Activated CD8-positive, alpha-beta T cell treated with anti-CD3 and anti-CD28 coated beads, Interleukin-2, amount 10 ng/mL, durations not matched to agents 7 days and 5 days (primary cell): ENCODE measurements at regions of chr5 and their contacts with region 1.

Region 1: DNA sequence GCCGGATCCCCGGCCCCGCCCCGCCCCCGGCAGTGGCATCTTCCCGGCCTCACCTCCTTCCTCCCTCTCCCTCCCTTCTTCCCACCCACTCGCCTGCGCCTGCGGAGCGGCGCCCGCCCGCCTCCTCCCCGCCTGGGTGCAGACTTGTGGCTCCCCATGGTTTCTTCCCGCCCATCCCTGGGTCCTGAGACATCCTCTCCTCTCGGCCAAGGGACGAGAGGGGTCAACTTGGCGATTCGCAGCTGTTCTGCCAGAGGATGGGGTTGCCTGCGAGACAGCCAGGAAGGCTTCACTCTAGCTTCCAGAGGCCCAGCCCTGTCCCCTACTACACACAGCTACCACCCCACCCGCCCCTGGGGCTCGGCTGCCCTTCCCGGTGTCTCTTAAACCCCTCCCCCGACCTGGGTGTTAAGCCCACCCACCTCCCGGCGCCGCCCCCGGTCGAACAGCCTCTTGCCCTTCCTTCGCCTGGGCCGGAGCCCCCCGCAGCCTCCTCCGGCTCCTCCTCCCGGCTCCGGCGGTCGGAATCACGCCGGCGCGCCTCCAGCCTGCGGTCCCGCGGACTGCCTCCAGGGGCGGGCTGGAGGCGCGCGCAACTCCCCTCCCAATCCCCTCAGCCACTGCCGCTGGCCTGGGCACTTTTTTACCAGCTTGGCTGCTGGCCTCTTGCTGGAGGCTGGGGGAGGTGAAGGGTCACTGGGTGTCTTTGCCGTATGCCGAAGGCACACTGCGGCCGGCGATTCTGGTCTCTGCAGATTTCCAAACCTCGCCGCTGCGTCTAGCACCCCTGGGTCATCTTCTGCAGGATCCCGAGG is 1.9 kb downstream of the JADE2 start:
- DNase-seq: peak; percentile 83
- ATAC-seq: peak; percentile 60
- H3K4me3 Mint-ChIP-seq: peak overlapping the region; percentile 88
- H3K27ac Mint-ChIP-seq: peak overlapping the region; percentile 93
- H3K4me1 Mint-ChIP-seq: peaks cover 36% of the 10 kb centered on the region
- H3K27me3 Mint-ChIP-seq: peaks cover under 1% of the 10 kb centered on the region

Region 2: GRCh38 chr5:134411546-134412266 is 115.6 kb before region 1 on chr5 and contains the start of gene CDKN2AIPNL:
- CTCF ChIA-PET with region 1: interaction called, 9 read pairs
- POLR2A ChIA-PET with region 1: interaction called, 29 read pairs
- DNase-seq: peak; percentile 92
- ATAC-seq: peak; percentile 100
- H3K4me3 Mint-ChIP-seq: peak within 1 kb of the TSS; percentile 96
- H3K27ac Mint-ChIP-seq: peak within 1 kb of the TSS; percentile 87
- H3K4me1 Mint-ChIP-seq: peaks cover 36% of the 10 kb centered on the region
- H3K27me3 Mint-ChIP-seq: no peaks in the 10 kb centered on the region
- total RNA-seq, gene CDKN2AIPNL: 31.3 to 32.5 TPM

Region 3: DNA sequence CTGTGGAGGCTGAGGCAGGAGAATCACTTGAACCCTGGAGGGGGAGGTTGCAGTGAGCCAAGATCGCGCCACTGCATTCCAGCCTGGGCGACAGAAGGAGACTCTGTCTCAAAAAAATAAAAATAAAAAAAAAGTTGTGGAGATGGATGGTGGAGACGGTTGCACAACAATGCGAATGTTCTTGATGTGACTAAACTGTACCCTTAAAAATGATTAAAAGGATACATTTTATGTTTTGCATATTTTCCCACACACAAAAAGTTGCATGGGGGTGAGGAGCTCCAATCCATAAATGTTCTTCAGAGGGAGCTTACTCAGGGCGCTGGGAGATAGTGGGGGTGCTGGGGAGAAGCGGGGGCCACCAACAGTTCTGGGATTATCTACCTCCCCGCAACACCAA is 71.9 kb before region 1 on chr5:
- CTCF ChIA-PET with region 1: no interaction called
- POLR2A ChIA-PET with region 1: no interaction called
- DNase-seq: no peak
- ATAC-seq: no peak
- H3K4me3 Mint-ChIP-seq: no peak overlapping the region
- H3K27ac Mint-ChIP-seq: no peak overlapping the region
- H3K4me1 Mint-ChIP-seq: peaks cover under 1% of the 10 kb centered on the region
- H3K27me3 Mint-ChIP-seq: peaks cover 8% of the 10 kb centered on the region

Region 4: GRCh38 chr5:134503088-134503946 is 24.0 kb before region 1 on chr5:
- CTCF ChIA-PET with region 1: interaction called, 4 read pairs
- POLR2A ChIA-PET with region 1: interaction called, 29 read pairs
- DNase-seq: peak; percentile 84
- ATAC-seq: peak; percentile 95
- H3K4me3 Mint-ChIP-seq: peak overlapping the region; percentile 52
- H3K27ac Mint-ChIP-seq: peak overlapping the region; percentile 94
- H3K4me1 Mint-ChIP-seq: peaks cover 53% of the 10 kb centered on the region
- H3K27me3 Mint-ChIP-seq: no peaks in the 10 kb centered on the region

Region 5: GRCh38 chr5:134541736-134542376 is 14.5 kb after region 1 on chr5:
- CTCF ChIA-PET with region 1: interaction called, 34 read pairs
- POLR2A ChIA-PET with region 1: interaction called, 45 read pairs
- DNase-seq: no peak
- ATAC-seq: no peak
- H3K4me3 Mint-ChIP-seq: no peak overlapping the region
- H3K27ac Mint-ChIP-seq: no peak overlapping the region
- H3K4me1 Mint-ChIP-seq: peaks cover 45% of the 10 kb centered on the region
- H3K27me3 Mint-ChIP-seq: no peaks in the 10 kb centered on the region

Region 6: DNA sequence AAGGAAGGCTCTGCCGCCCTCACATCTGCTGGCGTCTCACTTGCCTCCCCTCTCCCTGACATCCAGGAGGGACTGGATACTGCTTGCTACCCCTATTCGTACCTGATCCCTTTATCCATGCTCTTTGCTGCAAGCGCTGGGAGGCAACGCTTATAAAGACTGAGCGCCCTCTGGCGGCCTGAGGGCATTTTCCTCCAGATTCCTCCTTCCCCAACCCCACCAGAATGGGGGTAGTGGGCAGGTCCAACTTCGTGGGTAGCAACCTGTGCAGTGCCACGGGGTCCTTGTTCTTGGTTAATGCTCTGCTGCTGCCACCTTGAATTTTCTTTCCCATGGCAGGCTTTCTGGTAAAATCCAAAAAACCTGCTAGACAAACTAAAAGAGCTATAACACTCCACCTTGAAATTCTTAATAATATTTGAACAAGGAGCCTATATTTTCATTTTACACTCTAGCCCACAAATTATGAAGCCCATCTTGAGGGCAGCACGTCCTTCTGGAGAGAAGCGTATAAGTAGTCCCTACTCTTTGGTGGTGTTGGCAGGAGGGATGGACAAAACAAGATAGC is 50.5 kb after region 1 on chr5:
- CTCF ChIA-PET with region 1: interaction called, 19 read pairs
- POLR2A ChIA-PET with region 1: no interaction called
- DNase-seq: peak; percentile 81
- ATAC-seq: peak; percentile 74
- H3K4me3 Mint-ChIP-seq: no peak overlapping the region
- H3K27ac Mint-ChIP-seq: peak overlapping the region; percentile 30
- H3K4me1 Mint-ChIP-seq: peaks cover 3% of the 10 kb centered on the region
- H3K27me3 Mint-ChIP-seq: no peaks in the 10 kb centered on the region

Region 7: GRCh38 chr5:134659456-134659855 is 132.1 kb after region 1 on chr5:
- CTCF ChIA-PET with region 1: no interaction called
- POLR2A ChIA-PET with region 1: no interaction called
- DNase-seq: no peak
- ATAC-seq: peak; percentile 44
- H3K4me3 Mint-ChIP-seq: no peak overlapping the region
- H3K27ac Mint-ChIP-seq: peak overlapping the region; percentile 7
- H3K4me1 Mint-ChIP-seq: peaks cover 11% of the 10 kb centered on the region
- H3K27me3 Mint-ChIP-seq: no peaks in the 10 kb centered on the region

Region 8: DNA sequence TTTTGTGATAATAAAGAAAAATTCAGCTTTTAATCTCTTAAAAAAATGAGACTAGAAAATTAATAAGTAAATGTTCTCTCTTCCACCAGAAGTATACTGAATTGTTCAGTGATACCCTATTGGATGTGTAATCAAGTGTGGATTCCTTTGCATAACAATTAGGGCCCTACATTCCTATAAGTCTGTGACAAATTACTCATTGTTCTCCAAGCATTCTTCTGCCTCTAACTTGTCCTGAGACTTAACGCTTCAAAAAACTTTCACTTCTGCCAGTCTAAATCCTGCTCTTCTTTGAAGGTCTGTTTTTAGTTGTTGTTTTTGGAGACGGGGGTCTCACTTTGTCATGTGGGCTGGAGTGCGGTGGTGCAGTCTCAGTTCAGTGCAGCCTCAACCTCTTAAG is 222.1 kb after region 1 on chr5:
- CTCF ChIA-PET with region 1: no interaction called
- POLR2A ChIA-PET with region 1: no interaction called
- DNase-seq: no peak
- ATAC-seq: no peak
- H3K4me3 Mint-ChIP-seq: no peak overlapping the region
- H3K27ac Mint-ChIP-seq: peak overlapping the region; percentile 29
- H3K4me1 Mint-ChIP-seq: no peaks in the 10 kb centered on the region
- H3K27me3 Mint-ChIP-seq: no peaks in the 10 kb centered on the region

Region 9: DNA sequence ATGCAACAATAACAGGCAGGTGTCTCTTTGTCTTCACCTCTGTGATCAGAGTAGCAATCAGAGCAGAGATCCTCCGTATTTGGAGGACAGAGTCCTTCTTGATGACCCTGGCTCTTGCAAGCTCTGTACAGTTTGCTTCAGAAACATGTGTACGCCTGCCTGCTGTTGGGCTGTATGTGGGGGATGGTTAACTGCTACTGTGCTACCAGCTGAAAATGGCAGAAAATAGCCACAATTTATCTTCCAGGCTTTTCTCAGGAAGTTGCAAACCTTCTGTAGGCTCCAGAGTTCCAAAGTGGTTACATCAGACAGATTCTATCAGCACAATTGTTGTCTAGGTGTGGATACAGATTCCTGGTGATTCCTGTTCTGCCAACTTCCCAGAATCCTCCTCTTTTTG is 266.7 kb after region 1 on chr5:
- CTCF ChIA-PET with region 1: no interaction called
- POLR2A ChIA-PET with region 1: no interaction called
- DNase-seq: no peak
- ATAC-seq: no peak
- H3K4me3 Mint-ChIP-seq: no peak overlapping the region
- H3K27ac Mint-ChIP-seq: no peak overlapping the region
- H3K4me1 Mint-ChIP-seq: no peaks in the 10 kb centered on the region
- H3K27me3 Mint-ChIP-seq: no peaks in the 10 kb centered on the region